ENCODE measurements at regions of chr16 and their contacts with region 1.

Region 1: DNA sequence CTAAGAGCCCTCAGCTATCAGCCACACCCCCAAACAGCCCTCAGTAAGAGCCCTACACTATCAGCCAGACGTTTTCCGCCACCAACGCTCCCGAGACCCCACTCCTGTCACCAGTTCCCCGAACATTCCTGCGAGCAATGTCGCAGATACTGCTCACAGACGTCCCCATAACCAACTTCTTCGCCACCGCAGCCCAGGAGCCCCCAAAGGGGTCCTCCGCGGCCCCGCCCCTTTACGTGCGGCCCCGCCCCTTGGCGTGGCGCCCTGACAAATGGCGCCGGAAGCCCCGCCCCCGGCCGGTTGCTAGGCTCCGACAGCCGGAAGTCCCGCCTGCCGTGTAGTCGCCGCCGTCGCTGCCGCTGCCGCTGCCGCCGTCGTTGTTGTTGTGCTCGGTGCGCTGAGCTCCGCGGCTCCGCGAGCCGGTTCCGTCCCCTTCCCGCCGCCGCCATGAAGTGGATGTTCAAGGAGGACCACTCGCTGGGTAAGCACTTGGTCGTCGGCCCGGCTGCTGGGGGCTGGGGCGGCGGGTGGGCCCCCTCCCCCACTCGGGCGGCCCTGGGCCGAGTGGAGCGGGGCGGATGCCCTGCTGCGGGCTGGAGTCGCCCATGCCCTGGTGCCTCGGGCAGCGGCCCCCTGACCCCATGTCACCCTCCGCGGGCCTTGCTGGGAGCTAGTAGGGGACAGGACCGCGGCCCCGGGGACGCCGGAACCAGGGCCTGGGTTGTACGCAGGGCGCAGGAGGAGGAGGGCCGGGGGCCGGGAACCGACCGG is at the start of gene GABARAPL2:
- DNase-seq: peak; percentile 84 to 98 (median 94)
- ATAC-seq: peak; percentile 79
- H3K4me3 Mint-ChIP-seq: peak within 1 kb of the TSS; percentile 91 to 99 (median 98)
- H3K27ac Mint-ChIP-seq: peak within 1 kb of the TSS; percentile 92 to 99 (median 97)
- H3K4me1 Mint-ChIP-seq: peaks cover 8 to 52% (median 45%) of the 10 kb centered on the region in 4 donors
- H3K27me3 Mint-ChIP-seq: peaks cover 3 to 19% (median 9%) of the 10 kb centered on the region in 5 donors
- polyA plus RNA-seq, gene GABARAPL2: 226 to 291 (median 250) TPM

Region 2: DNA sequence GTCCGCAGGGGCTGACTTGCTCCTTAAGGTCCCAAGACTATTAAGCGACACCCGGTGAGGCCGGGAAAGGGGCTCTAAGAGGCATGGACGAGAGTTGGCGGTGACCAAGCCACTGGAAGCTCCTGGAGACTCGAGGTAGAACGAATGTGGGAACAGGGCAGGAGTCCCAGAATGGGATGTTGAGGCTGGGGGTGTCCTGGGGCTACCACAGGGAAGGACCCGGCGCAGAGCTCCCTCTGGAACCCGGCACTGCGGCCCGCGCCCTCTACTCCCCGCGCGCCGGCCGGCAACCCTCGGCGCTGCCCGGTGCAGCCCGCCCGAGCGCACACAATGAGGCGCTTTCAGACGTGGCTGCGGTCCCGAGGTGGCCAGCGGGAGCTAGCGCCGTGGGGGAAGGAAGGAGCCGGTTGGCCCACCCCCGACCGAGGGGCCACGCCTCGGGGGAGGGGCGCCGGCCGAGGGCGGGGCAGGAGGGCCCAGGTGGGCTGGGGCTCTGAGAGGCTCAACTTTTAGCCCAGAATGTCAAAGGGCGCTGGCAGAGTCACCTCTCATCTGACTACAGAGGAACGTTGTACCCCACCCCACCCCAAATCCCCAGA is 71.0 kb before region 1 on chr16 and contains the start of gene CHST6:
- POLR2A ChIA-PET with region 1: no interaction called
- DNase-seq: peak in 3 of 10 donors; percentile 3 to 19 (median 10)
- ATAC-seq: peak; percentile 51 to 75
- H3K4me3 Mint-ChIP-seq: peak within 1 kb of the TSS; percentile 61 to 85 (median 74)
- H3K27ac Mint-ChIP-seq: peak within 1 kb of the TSS in 1 of 10 donors; percentile 64
- H3K4me1 Mint-ChIP-seq: peaks cover 7 to 10% (median 8%) of the 10 kb centered on the region in 4 donors
- H3K27me3 Mint-ChIP-seq: peaks cover 10 to 43% (median 12%) of the 10 kb centered on the region in 5 donors
- polyA plus RNA-seq, gene CHST6: not detected

Region 3: GRCh38 chr16:75555707-75556430 is 10.4 kb before region 1 on chr16 and contains the start of gene TMEM231:
- POLR2A ChIA-PET with region 1: interaction called, 38 read pairs
- DNase-seq: peak; percentile 90 to 98 (median 95)
- ATAC-seq: peak; percentile 94
- H3K4me3 Mint-ChIP-seq: peak within 1 kb of the TSS; percentile 81 to 94 (median 90)
- H3K27ac Mint-ChIP-seq: peak within 1 kb of the TSS; percentile 87 to 95 (median 93)
- H3K4me1 Mint-ChIP-seq: peaks cover 4 to 13% (median 11%) of the 10 kb centered on the region in 4 donors
- H3K27me3 Mint-ChIP-seq: peaks cover 4 to 20% (median 6%) of the 10 kb centered on the region in 5 donors
- polyA plus RNA-seq, gene TMEM231: 0.95 to 1.4 (median 0.99) TPM

Region 4: GRCh38 chr16:75622761-75623605 is 56.8 kb after region 1 on chr16 and contains the start of gene ADAT1:
- POLR2A ChIA-PET with region 1: interaction called, 32 read pairs
- DNase-seq: peak; percentile 91 to 99 (median 98)
- ATAC-seq: peak; percentile 92 to 95
- H3K4me3 Mint-ChIP-seq: peak within 1 kb of the TSS; percentile 93 to 99 (median 96)
- H3K27ac Mint-ChIP-seq: peak within 1 kb of the TSS; percentile 91 to 99 (median 98)
- H3K4me1 Mint-ChIP-seq: peaks cover 30 to 60% (median 52%) of the 10 kb centered on the region in 4 donors
- H3K27me3 Mint-ChIP-seq: no peaks in the 10 kb centered on the region
- polyA plus RNA-seq, gene ADAT1: 35.0 to 41.5 (median 39.8) TPM

Measured in naive thymus-derived CD8-positive, alpha-beta T cell (primary cell).